OCI-LY7 (cell line): ENCODE measurements at regions of chr5 and their contacts with region 1.

Region 1: DNA sequence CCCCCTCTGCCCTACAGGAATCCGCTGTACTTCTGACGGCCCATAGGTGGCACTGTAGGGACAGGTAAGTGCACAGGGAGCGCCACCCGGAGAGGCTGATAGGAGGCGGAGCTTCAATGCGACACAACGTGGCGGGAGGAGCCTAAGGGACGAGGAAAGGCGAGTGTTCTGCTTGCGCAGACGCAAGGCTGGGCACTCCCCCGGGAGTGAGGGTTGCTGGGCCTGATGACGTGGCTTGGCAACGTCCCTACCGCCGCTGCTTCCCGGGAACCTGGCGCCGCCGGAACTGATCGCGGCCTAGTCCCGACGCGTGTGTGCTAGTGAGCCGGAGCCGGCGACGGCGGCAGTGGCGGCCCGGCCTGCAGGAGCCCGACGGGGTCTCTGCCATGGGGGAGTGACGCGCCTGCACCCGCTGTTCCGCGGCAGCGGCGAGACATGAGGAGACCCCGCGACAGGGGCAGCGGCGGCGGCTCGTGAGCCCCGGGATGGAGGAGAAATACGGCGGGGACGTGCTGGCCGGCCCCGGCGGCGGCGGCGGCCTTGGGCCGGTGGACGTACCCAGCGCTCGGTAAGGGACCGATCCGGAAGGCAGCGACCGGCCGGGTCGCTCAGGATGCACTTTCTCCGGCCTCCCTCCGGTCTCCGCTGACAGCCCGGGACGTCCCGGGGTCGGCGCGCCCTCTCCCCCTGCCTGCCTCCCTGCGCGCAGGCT is at the start of gene SLC30A5:
- DNase-seq: peak; percentile 100
- H3K4me3 ChIP-seq: peak within 1 kb of the TSS; percentile 87
- H3K27ac ChIP-seq: peak within 1 kb of the TSS; percentile 53
- H3K4me1 ChIP-seq: peaks cover 14% of the 10 kb centered on the region
- CTCF ChIP-seq: peak; percentile 84
- total RNA-seq, gene SLC30A5: 30.2 and 47.5 TPM in 2 replicates

Region 2: GRCh38 chr5:68950125-68950524 is 143.8 kb before region 1 on chr5:
- CTCF ChIA-PET with region 1: no interaction called
- POLR2A ChIA-PET with region 1: no interaction called
- intact Hi-C with region 1: no loop called
- DNase-seq: no peak
- H3K4me3 ChIP-seq: no peak overlapping the region
- H3K27ac ChIP-seq: no peak overlapping the region
- H3K4me1 ChIP-seq: no peaks in the 10 kb centered on the region
- CTCF ChIP-seq: no peak

Region 3: GRCh38 chr5:69217548-69218526 is 123.9 kb after region 1 on chr5:
- CTCF ChIA-PET with region 1: no interaction called
- POLR2A ChIA-PET with region 1: no interaction called
- intact Hi-C with region 1: loop called (anchors 1 kb)
- DNase-seq: peak; percentile 95
- H3K4me3 ChIP-seq: peak overlapping the region; percentile 85
- H3K27ac ChIP-seq: peak overlapping the region; percentile 75
- H3K4me1 ChIP-seq: peaks cover 25% of the 10 kb centered on the region
- CTCF ChIP-seq: no peak

Region 4: DNA sequence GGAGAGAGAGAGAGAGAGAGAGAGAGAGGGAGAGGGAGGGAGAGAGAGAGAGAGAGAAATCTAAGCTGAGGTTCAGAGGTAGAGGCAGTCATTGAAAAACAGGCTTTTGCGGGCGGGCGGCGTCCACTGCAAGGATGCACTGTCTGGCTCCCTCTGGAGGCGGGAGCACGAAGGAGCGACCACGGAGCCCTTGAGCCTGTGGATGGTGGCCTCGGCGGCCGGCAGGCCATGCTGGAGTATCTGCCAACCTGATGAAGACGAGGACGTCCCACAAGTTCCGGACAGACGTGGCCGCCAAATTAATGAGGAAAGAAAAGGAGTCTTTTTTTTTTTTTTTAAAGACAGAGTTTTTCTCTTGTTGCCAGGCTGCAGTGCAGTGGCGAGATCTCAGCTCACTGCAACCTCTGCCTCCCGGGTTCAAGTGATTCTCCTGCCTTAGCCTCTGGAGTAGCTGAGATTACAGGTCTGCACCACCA is 240.9 kb after region 1 on chr5:
- CTCF ChIA-PET with region 1: no interaction called
- POLR2A ChIA-PET with region 1: no interaction called
- intact Hi-C with region 1: loop called (anchors 1 kb)
- DNase-seq: peak; percentile 82
- H3K4me3 ChIP-seq: no peak overlapping the region
- H3K27ac ChIP-seq: no peak overlapping the region
- H3K4me1 ChIP-seq: peaks cover 16% of the 10 kb centered on the region
- CTCF ChIP-seq: peak; percentile 80

Region 5: GRCh38 chr5:69414885-69415583 is 321.1 kb after region 1 on chr5 and contains the start of gene MARVELD2:
- CTCF ChIA-PET with region 1: no interaction called
- POLR2A ChIA-PET with region 1: interaction called, 4 read pairs
- intact Hi-C with region 1: loop called (anchors 5 kb)
- DNase-seq: no peak
- H3K4me3 ChIP-seq: no peak within 1 kb of the TSS
- H3K27ac ChIP-seq: no peak within 1 kb of the TSS
- H3K4me1 ChIP-seq: no peaks in the 10 kb centered on the region
- CTCF ChIP-seq: no peak
- total RNA-seq, gene MARVELD2: 0.57 and 0.82 TPM in 2 replicates